Psoas muscle (tissue), 8 donors: ENCODE measurements at regions of chr1 and their contacts with region 1.

Region 1: DNA sequence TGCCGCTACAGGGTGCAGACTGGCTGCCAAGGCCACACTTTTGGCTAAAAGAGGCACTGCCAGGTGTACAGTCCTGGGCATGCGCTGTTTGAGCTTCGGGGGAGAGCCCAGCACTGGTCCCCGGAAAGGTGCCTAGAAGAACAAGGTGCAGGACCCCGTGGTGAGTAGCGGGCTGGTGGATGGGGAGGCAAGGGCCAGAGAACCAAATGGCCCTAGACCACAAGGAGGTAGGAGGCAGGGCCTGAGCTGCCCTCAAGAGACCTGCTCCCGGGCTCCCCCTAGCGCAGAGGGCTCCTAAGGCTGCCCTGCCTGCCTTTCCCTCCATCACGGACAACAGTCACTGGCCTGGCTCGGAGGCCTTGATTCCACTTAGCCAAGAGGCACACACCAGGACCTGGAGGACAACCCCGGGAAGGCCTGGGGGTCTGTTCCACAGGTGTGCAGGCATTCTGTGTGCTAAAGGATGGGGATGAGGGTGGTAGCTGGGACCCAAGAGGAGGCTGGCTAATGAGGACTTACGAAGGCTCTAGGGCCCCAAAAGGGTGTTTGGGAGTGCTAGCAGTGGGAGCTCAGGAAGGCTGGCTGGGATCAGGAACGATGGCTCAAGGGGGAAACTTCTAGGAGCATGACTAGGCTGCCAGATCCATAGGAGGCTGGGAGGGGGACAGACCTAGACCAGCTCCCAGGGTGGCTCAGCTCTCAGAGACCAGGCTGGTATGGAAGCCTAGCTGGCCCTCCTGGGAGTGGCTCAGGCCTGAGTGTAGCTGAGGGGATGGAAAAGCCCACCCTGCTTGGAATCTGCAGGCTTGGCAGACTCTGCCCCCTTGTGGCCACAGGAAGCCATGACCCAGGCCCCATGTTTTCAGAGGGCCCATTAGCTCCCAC is 742 bp downstream of the ARTN start:
- DNase-seq: peak; percentile 72 to 87
- ATAC-seq: peak; percentile 79 to 86 (median 79)
- H3K4me3 ChIP-seq: peak overlapping the region; percentile 61
- H3K27ac ChIP-seq: peak overlapping the region; percentile 50
- H3K4me1 ChIP-seq: peaks cover 25% of the 10 kb centered on the region
- H3K27me3 ChIP-seq: peaks cover 0 to 4% (median 0%) of the 10 kb centered on the region in 3 donors
- CTCF ChIP-seq: peak; percentile 79

Region 2: GRCh38 chr1:43671626-43672330 is 262.6 kb before region 1 on chr1:
- intact Hi-C with region 1: loop called in 1 of 2 experiments (anchors 10 kb)
- DNase-seq: no peak
- ATAC-seq: peak in 3 of 4 donors; percentile 44 to 65 (median 51)
- H3K4me3 ChIP-seq: no peak overlapping the region
- H3K27ac ChIP-seq: no peak overlapping the region
- H3K4me1 ChIP-seq: peaks cover 7% of the 10 kb centered on the region
- H3K27me3 ChIP-seq: no peaks in the 10 kb centered on the region
- CTCF ChIP-seq: no peak

Region 3: GRCh38 chr1:43836267-43836951 is 97.9 kb before region 1 on chr1:
- intact Hi-C with region 1: loop called in 1 of 2 experiments (anchors 5 kb)
- DNase-seq: peak; percentile 33 to 63
- ATAC-seq: peak; percentile 34 to 70 (median 52)
- H3K4me3 ChIP-seq: no peak overlapping the region
- H3K27ac ChIP-seq: no peak overlapping the region
- H3K4me1 ChIP-seq: peaks cover 10% of the 10 kb centered on the region
- H3K27me3 ChIP-seq: no peaks in the 10 kb centered on the region
- CTCF ChIP-seq: no peak

Region 4: GRCh38 chr1:43881415-43881814 is 52.9 kb before region 1 on chr1:
- intact Hi-C with region 1: loop called in 1 of 2 experiments (anchors 5 kb)
- DNase-seq: no peak
- ATAC-seq: peak in 3 of 4 donors; percentile 17 to 58 (median 21)
- H3K4me3 ChIP-seq: no peak overlapping the region
- H3K27ac ChIP-seq: peak overlapping the region; percentile 82
- H3K4me1 ChIP-seq: peaks cover 32% of the 10 kb centered on the region
- H3K27me3 ChIP-seq: no peaks in the 10 kb centered on the region
- CTCF ChIP-seq: no peak